ENCODE measurements at regions of chr6 and their contacts with region 1.

Region 1: GRCh38 chr6:142885182-142885867 is 59.7 kb downstream of the HIVEP2 start:
- DNase-seq: peak; percentile 97
- H3K4me3 Mint-ChIP-seq: peak overlapping the region; percentile 71
- H3K27ac Mint-ChIP-seq: peak overlapping the region; percentile 36
- H3K4me1 Mint-ChIP-seq: peaks cover 32% of the 10 kb centered on the region
- H3K27me3 Mint-ChIP-seq: no peaks in the 10 kb centered on the region
- CTCF ChIP-seq: no peak

Region 2: DNA sequence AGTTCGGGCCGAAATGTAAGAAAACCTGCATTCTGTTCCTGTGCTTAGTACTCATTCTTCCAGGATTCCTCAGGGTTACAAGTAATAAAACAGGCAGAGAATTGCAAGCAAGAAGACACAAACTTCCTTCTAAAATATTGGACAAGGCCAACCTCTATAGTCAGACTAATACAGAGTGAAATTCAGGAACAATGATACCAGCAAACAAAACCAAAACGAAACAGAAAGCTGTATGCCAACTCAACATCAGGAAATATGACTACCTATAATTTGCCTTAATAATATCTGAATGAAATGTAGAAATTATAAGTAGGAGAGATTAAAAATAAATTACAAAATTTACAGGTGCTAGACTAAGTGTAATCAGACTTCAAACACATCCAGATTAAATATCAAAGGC is 179.1 kb before region 1 on chr6:
- CTCF ChIA-PET with region 1: no interaction called
- POLR2A ChIA-PET with region 1: no interaction called
- intact Hi-C with region 1: no loop called
- DNase-seq: no peak
- H3K4me3 Mint-ChIP-seq: no peak overlapping the region
- H3K27ac Mint-ChIP-seq: no peak overlapping the region
- H3K4me1 Mint-ChIP-seq: no peaks in the 10 kb centered on the region
- H3K27me3 Mint-ChIP-seq: no peaks in the 10 kb centered on the region
- CTCF ChIP-seq: no peak

Region 3: GRCh38 chr6:142756215-142756634 is 129.1 kb before region 1 on chr6:
- CTCF ChIA-PET with region 1: no interaction called
- POLR2A ChIA-PET with region 1: no interaction called
- intact Hi-C with region 1: loop called (anchors 2 kb)
- DNase-seq: peak; percentile 23
- H3K4me3 Mint-ChIP-seq: no peak overlapping the region
- H3K27ac Mint-ChIP-seq: peak overlapping the region; percentile 51
- H3K4me1 Mint-ChIP-seq: peaks cover 24% of the 10 kb centered on the region
- H3K27me3 Mint-ChIP-seq: no peaks in the 10 kb centered on the region
- CTCF ChIP-seq: no peak

Region 4: GRCh38 chr6:142833054-142833453 is 52.3 kb before region 1 on chr6:
- CTCF ChIA-PET with region 1: interaction called, 4 read pairs
- POLR2A ChIA-PET with region 1: interaction called, 11 read pairs
- intact Hi-C with region 1: loop called (anchors 5 kb)
- DNase-seq: peak; percentile 86
- H3K4me3 Mint-ChIP-seq: no peak overlapping the region
- H3K27ac Mint-ChIP-seq: peak overlapping the region; percentile 13
- H3K4me1 Mint-ChIP-seq: peaks cover 29% of the 10 kb centered on the region
- H3K27me3 Mint-ChIP-seq: no peaks in the 10 kb centered on the region
- CTCF ChIP-seq: no peak

Region 5: DNA sequence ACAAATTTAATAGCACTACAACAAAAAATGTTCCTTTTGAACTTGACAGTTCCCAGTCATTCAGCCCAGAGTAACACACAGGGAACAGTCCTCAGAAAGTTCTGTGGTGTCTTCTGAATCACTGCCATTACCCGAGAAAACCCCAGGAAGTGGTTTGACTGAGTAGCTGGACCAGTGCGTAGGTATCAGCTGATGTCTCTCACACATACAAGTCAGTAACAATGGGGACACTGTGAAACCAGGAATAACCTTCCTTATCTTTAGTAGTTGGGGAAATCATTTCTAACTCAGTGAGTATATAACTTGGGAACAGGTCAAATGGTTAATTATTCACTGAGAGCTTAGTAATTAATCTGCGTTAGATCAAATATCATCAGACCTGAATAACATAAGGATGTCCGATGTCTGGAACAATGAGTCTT is 13.4 kb before region 1 on chr6:
- CTCF ChIA-PET with region 1: no interaction called
- POLR2A ChIA-PET with region 1: interaction called, 17 read pairs
- intact Hi-C with region 1: no loop called
- DNase-seq: peak; percentile 48
- H3K4me3 Mint-ChIP-seq: no peak overlapping the region
- H3K27ac Mint-ChIP-seq: peak overlapping the region; percentile 70
- H3K4me1 Mint-ChIP-seq: peaks cover 52% of the 10 kb centered on the region
- H3K27me3 Mint-ChIP-seq: no peaks in the 10 kb centered on the region
- CTCF ChIP-seq: no peak

Region 6: GRCh38 chr6:143060354-143060805 is 175.1 kb after region 1 on chr6:
- CTCF ChIA-PET with region 1: no interaction called
- POLR2A ChIA-PET with region 1: interaction called, 5 read pairs
- intact Hi-C with region 1: loop called (anchors 5 kb)
- DNase-seq: peak; percentile 90
- H3K4me3 Mint-ChIP-seq: peak overlapping the region; percentile 94
- H3K27ac Mint-ChIP-seq: peak overlapping the region; percentile 97
- H3K4me1 Mint-ChIP-seq: peaks cover 37% of the 10 kb centered on the region
- H3K27me3 Mint-ChIP-seq: no peaks in the 10 kb centered on the region
- CTCF ChIP-seq: no peak